ENCODE measurements at regions of chr10 and their contacts with region 1.

Region 1: GRCh38 chr10:92432596-92432995 is 141.3 kb downstream of the IDE start:
- ATAC-seq: no peak
- H3K4me3 ChIP-seq: no peak overlapping the region
- H3K27ac ChIP-seq: no peak overlapping the region
- H3K4me1 ChIP-seq: peaks cover 0 to 3% of the 10 kb centered on the region in 2 donors

Region 2: DNA sequence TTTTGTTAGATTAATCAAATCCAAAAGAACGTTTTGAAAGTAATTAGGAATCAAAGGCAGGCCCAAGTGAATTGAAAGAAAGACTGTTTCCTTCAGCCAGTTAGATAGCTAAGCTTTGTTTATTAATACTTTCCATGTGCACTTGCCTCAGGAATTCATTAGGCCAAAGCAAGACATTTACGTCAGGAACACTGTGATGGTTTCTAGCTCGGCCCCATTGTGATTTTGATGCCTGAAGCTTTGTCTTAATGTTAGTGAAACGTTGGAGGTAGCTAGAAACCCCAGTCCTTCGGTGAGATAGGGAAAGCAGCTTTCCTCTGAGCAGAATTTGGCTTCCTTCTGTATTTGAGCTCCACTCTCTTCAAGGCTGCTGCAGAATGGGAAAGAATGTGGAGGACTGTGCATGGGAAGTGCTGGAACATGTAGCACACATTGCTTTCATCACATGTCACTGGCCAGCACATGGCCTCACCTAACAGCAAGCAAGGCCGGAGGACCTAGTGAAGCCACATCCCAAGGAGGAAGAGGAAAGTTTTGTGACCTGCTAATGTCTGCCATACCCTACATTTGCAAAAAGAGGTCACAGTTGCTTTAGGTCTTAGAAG is 1148.0 kb before region 1 on chr10:
- in situ Hi-C with region 1: no loop called
- ATAC-seq: no peak
- H3K4me3 ChIP-seq: no peak overlapping the region
- H3K27ac ChIP-seq: no peak overlapping the region
- H3K4me1 ChIP-seq: no peaks in the 10 kb centered on the region

Region 3: DNA sequence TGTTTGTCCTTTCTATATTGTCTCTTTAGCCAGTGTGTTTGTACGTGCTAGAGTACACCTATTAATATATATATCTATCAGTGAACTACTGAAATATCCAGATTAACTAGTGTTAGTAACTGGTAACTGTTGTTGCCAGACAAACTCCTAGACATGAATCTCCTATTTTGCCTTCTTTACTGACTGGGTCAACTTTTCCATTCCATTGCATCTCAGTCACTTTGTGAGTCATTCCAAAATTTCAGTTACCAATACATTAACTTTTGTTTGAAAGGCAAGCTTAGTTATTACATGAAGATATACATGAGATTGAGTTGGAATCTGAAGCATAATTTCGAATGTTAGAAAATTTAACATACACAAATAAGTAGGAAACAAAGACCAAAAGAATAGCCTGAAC is 457.6 kb before region 1 on chr10:
- in situ Hi-C with region 1: loop called in 1 of 9 experiments (anchors 25 kb)
- ATAC-seq: peak in 1 of 8 experiments; percentile 16
- H3K4me3 ChIP-seq: no peak overlapping the region
- H3K27ac ChIP-seq: no peak overlapping the region
- H3K4me1 ChIP-seq: no peaks in the 10 kb centered on the region

Region 4: DNA sequence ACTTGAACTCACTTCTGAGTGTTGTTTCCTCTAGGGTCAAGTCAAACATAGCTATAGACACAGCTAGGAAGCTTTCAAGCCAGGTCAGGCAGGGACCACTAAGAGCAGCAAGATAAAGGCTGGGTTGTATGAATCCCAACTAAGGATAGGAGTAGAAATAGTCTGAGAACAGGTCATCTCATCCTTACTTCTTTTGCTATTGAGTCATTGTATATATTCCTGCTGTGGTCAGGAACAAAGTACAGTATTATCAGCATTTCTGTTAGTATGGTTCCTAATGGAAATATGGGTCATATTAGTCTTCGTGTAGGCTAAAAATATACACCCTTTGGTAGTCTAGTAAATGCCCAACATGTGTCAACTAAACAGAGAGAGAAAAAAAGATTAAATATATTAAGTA is 363.7 kb before region 1 on chr10:
- in situ Hi-C with region 1: no loop called
- ATAC-seq: no peak
- H3K4me3 ChIP-seq: no peak overlapping the region
- H3K27ac ChIP-seq: no peak overlapping the region
- H3K4me1 ChIP-seq: no peaks in the 10 kb centered on the region

Region 5: GRCh38 chr10:92087750-92088395 is 344.7 kb before region 1 on chr10:
- in situ Hi-C with region 1: loop called in 6 of 9 experiments (anchors 10 to 25 kb)
- ATAC-seq: peak; percentile 99 to 100 (median 100)
- H3K4me3 ChIP-seq: peak overlapping the region in 2 of 5 donors; percentile 1 to 12
- H3K27ac ChIP-seq: no peak overlapping the region
- H3K4me1 ChIP-seq: no peaks in the 10 kb centered on the region

Region 6: GRCh38 chr10:92640110-92640509 is 207.5 kb after region 1 on chr10:
- in situ Hi-C with region 1: no loop called
- ATAC-seq: peak in 1 of 8 experiments; percentile 37
- H3K4me3 ChIP-seq: no peak overlapping the region
- H3K27ac ChIP-seq: no peak overlapping the region
- H3K4me1 ChIP-seq: no peaks in the 10 kb centered on the region